Activated CD8-positive, alpha-beta T cell treated with anti-CD3 and anti-CD28 coated beads, Interleukin-2, amount 10 ng/mL, durations not matched to agents 7 days and 5 days (primary cell): ENCODE measurements at regions of chr6 and their contacts with region 1.

Region 1: GRCh38 chr6:52263709-52264540 is 19.6 kb upstream of the IL17F start:
- DNase-seq: peak; percentile 80
- ATAC-seq: peak; percentile 75
- H3K4me3 Mint-ChIP-seq: no peak overlapping the region
- H3K27ac Mint-ChIP-seq: no peak overlapping the region
- H3K4me1 Mint-ChIP-seq: peaks cover 14% of the 10 kb centered on the region
- H3K27me3 Mint-ChIP-seq: no peaks in the 10 kb centered on the region

Region 2: DNA sequence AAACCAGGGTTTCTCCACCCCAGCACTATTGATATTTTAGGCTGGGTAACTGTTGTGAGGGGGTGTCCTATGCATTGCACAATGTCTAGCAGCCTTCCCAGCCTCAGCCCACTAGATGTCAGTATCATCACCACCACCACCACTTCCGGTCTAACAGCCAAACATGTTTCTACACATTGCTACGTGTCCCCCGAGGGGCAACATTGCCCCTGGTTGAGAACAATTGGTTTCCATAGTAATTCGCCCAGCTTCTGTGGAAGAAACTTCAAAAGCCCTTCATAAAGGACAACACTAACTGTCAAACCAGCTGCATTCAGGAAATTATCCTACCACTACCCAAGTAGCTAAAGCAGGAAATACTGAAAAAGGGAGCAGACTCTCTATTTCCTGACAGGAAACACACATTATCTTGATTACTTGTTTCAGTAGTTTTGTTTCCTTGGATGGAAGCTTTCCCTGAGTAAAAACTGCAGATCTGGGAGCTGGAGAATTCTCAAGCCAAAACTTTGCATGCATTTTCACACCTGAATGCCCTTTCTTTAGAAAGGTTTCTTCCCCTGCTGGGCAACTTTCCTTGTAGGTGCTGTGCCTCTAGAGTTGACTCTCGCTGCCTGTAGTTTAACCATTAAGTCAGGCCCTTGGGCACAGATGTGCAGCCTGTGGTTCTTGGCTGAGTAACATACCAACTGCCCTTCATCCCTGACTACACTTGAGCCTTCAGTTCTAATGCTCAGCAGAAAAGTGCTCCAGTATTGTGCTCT is 200.2 kb before region 1 on chr6:
- CTCF ChIA-PET with region 1: interaction called, 13 read pairs
- POLR2A ChIA-PET with region 1: no interaction called
- DNase-seq: peak; percentile 84
- ATAC-seq: peak; percentile 99
- H3K4me3 Mint-ChIP-seq: peak overlapping the region; percentile 47
- H3K27ac Mint-ChIP-seq: peak overlapping the region; percentile 88
- H3K4me1 Mint-ChIP-seq: peaks cover 12% of the 10 kb centered on the region
- H3K27me3 Mint-ChIP-seq: peaks cover 27% of the 10 kb centered on the region

Region 3: DNA sequence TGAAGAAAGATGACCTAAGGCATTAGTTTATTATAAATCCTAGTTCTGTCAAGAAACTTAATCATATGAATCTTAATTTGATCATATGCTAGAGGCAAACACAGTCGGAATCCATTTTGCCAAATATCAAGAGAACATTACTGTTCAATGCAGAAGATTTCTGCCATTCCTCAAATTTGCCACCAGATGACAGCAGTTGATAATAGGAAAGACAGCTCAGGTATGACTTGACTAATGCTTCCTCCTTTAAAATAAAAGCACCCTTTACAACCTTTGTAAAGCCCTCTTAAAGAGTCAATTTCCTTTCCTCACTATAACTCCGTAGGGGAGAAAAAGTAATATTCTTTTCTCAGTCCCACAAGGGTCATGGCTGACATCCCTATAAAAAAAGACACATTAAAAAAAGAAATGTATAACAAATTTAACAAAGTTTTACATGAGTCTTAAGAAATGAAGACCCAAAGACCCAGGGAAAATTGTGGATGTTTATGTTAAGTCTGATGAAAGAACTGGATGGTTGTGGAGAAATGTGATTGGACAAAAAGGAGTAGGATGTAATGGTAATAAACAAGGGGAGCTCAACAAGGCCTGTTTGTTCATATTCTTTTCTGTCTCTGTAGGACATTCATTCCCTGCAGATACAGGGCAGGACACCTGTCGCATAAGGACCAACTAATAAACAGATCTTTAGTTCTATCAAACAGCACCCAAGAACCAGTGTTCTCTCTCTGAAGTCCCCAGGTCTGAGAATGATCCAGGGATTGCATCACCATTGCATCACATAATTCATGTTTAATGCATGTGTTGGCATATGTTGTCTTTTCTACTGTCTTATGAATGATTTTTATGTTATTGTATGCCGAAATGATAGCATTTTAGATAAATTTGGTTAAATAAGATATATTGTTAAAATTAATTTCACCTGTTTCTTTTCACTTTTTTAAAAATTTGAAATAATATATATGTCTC is 100.7 kb before region 1 on chr6:
- CTCF ChIA-PET with region 1: interaction called, 90 read pairs
- POLR2A ChIA-PET with region 1: no interaction called
- DNase-seq: no peak
- ATAC-seq: peak; percentile 49
- H3K4me3 Mint-ChIP-seq: no peak overlapping the region
- H3K27ac Mint-ChIP-seq: no peak overlapping the region
- H3K4me1 Mint-ChIP-seq: no peaks in the 10 kb centered on the region
- H3K27me3 Mint-ChIP-seq: peaks cover 32% of the 10 kb centered on the region

Region 4: GRCh38 chr6:52213127-52213526 is 50.8 kb before region 1 on chr6:
- CTCF ChIA-PET with region 1: interaction called, 16 read pairs
- POLR2A ChIA-PET with region 1: interaction called, 3 read pairs
- DNase-seq: no peak
- ATAC-seq: peak; percentile 33
- H3K4me3 Mint-ChIP-seq: no peak overlapping the region
- H3K27ac Mint-ChIP-seq: no peak overlapping the region
- H3K4me1 Mint-ChIP-seq: no peaks in the 10 kb centered on the region
- H3K27me3 Mint-ChIP-seq: peaks cover 41% of the 10 kb centered on the region

Region 5: DNA sequence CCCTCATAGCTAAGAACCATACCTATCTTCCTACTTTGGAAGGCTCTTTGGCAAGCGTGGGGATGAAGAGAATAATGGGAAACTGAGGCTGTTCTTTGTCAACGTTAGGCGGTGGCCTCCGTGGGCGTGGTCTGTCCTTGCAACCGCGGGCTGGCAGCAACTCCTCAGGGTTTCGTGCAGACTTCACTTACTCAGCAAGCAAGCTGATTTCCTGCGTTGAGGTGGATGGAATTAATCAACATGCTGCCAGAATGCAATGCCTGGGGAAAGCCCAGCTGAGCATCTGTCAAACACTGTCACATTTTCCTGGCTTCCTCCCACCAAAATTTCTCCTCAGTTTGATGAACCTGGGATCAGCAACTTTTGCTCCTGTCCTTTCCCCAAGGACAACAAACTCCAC is 10.4 kb before region 1 on chr6:
- CTCF ChIA-PET with region 1: interaction called, 13 read pairs
- POLR2A ChIA-PET with region 1: no interaction called
- DNase-seq: no peak
- ATAC-seq: no peak
- H3K4me3 Mint-ChIP-seq: no peak overlapping the region
- H3K27ac Mint-ChIP-seq: no peak overlapping the region
- H3K4me1 Mint-ChIP-seq: peaks cover 19% of the 10 kb centered on the region
- H3K27me3 Mint-ChIP-seq: peaks cover 52% of the 10 kb centered on the region

Region 6: GRCh38 chr6:52632011-52632410 is 368.1 kb after region 1 on chr6:
- CTCF ChIA-PET with region 1: no interaction called
- POLR2A ChIA-PET with region 1: no interaction called
- DNase-seq: no peak
- ATAC-seq: no peak
- H3K4me3 Mint-ChIP-seq: no peak overlapping the region
- H3K27ac Mint-ChIP-seq: no peak overlapping the region
- H3K4me1 Mint-ChIP-seq: peaks cover 4% of the 10 kb centered on the region
- H3K27me3 Mint-ChIP-seq: peaks cover 2% of the 10 kb centered on the region